ENCODE measurements at regions of chr2 and their contacts with region 1.

Region 1: GRCh38 chr2:222232372-222232771 is 66.4 kb downstream of the PAX3 start:
- DNase-seq: no peak
- H3K4me3 ChIP-seq: no peak overlapping the region
- H3K27ac ChIP-seq: no peak overlapping the region
- H3K4me1 ChIP-seq: no peaks in the 10 kb centered on the region
- H3K27me3 ChIP-seq: no peaks in the 10 kb centered on the region
- CTCF ChIP-seq: no peak

Region 2: GRCh38 chr2:222248818-222249217 is 16.4 kb after region 1 on chr2:
- intact Hi-C with region 1: loop called (anchors 1 kb)
- DNase-seq: no peak
- H3K4me3 ChIP-seq: no peak overlapping the region
- H3K27ac ChIP-seq: no peak overlapping the region
- H3K4me1 ChIP-seq: no peaks in the 10 kb centered on the region
- H3K27me3 ChIP-seq: no peaks in the 10 kb centered on the region
- CTCF ChIP-seq: no peak

Region 3: GRCh38 chr2:222290736-222291484 is 58.5 kb after region 1 on chr2:
- intact Hi-C with region 1: no loop called
- DNase-seq: no peak
- H3K4me3 ChIP-seq: peak overlapping the region in 1 of 2 donors; percentile 16
- H3K27ac ChIP-seq: no peak overlapping the region
- H3K4me1 ChIP-seq: peaks cover 5 to 10% of the 10 kb centered on the region in 2 donors
- H3K27me3 ChIP-seq: peaks cover 23% of the 10 kb centered on the region
- CTCF ChIP-seq: no peak